ENCODE measurements at regions of chr9 and their contacts with region 1.

Region 1: GRCh38 chr9:763692-764524 is 77.6 kb upstream of the DMRT1 start:
- DNase-seq: peak; percentile 76
- H3K4me3 ChIP-seq: no peak overlapping the region
- H3K27ac ChIP-seq: no peak overlapping the region
- H3K4me1 ChIP-seq: no peaks in the 10 kb centered on the region
- H3K27me3 ChIP-seq: no peaks in the 10 kb centered on the region
- CTCF ChIP-seq: peak; percentile 88

Region 2: DNA sequence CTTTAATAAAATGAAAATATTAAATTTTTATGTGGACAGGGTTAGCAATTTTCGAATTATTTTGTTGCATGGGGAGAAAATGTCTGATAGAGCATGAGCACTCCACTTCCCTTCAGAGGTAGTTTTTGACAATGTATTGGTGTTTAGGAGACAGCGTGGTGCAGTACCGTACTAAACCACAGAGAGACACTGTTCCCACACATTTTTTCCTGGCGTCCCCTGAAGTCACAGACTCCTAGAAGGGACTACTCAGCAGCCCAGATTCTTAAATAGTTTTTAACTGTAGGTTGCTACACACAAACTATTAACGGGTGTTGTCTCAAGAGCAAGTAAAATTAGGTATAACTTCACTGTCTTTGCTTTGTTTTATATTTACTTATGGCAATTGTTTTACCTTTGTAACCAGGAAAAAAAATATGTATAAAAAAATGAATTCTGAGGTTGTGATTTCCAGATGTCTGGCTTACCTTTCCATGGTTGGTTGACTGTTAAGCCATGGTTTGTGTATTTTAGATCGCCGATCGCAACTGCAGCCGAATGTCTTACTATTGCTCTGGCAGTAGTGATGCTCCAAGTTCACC is 378.0 kb before region 1 on chr9:
- intact Hi-C with region 1: loop called (anchors 5 kb)
- DNase-seq: peak; percentile 66
- H3K4me3 ChIP-seq: no peak overlapping the region
- H3K27ac ChIP-seq: no peak overlapping the region
- H3K4me1 ChIP-seq: no peaks in the 10 kb centered on the region
- H3K27me3 ChIP-seq: no peaks in the 10 kb centered on the region
- CTCF ChIP-seq: peak; percentile 88

Region 3: GRCh38 chr9:551986-552929 is 211.7 kb before region 1 on chr9:
- intact Hi-C with region 1: loop called (anchors 10 kb)
- DNase-seq: no peak
- H3K4me3 ChIP-seq: no peak overlapping the region
- H3K27ac ChIP-seq: no peak overlapping the region
- H3K4me1 ChIP-seq: peaks cover 4% of the 10 kb centered on the region
- H3K27me3 ChIP-seq: no peaks in the 10 kb centered on the region
- CTCF ChIP-seq: no peak

Region 4: GRCh38 chr9:693201-694091 is 70.5 kb before region 1 on chr9:
- intact Hi-C with region 1: no loop called
- DNase-seq: peak; percentile 44
- H3K4me3 ChIP-seq: no peak overlapping the region
- H3K27ac ChIP-seq: peak overlapping the region; percentile 59
- H3K4me1 ChIP-seq: no peaks in the 10 kb centered on the region
- H3K27me3 ChIP-seq: no peaks in the 10 kb centered on the region
- CTCF ChIP-seq: no peak

Measured in colonic mucosa (tissue), 4 donors.